Colonic mucosa (tissue), 4 donors: ENCODE measurements at regions of chr4 and their contacts with region 1.

Region 1: DNA sequence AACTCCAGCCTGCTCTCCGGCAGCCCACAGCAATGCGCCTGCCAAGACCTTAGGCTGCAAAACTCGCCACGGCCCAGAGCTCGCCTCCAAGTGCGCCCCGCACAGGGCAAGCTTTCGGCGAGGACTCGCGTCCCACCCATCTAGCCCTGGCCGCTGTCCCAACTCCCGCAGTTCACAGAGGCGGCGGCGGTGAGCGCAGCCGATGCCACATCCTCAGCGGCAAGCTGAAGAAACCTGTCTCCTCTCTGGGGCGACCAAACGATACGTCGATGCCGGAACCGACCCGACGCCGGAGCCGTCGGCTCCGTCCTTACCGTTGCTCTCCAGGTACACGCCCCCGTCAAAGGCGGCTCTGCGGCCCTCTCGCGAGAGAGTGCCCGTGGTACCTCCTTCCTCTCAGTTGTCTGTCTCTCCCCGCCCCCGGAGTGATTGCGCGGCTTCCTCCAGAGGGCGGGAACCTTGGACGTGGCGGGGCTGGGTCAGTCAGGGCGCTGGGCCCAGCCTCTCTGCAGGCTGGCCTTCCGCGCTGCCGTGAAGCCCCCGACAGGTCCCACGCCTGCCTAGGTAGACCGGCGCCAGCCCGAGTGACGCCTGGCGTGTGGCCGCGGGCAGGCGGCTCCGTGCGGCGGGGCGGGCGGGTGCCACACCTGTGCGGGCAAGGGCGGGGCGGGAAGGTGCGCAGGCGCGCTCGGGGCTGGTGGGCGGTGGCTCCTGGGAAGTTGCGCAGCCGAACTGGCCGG is 380 bp upstream of the RAB33B start:
- DNase-seq: peak; percentile 98
- H3K4me3 ChIP-seq: peak overlapping the region; percentile 83
- H3K27ac ChIP-seq: peak overlapping the region; percentile 99
- H3K4me1 ChIP-seq: peaks cover 6% of the 10 kb centered on the region
- H3K27me3 ChIP-seq: no peaks in the 10 kb centered on the region
- CTCF ChIP-seq: peak; percentile 10

Region 2: DNA sequence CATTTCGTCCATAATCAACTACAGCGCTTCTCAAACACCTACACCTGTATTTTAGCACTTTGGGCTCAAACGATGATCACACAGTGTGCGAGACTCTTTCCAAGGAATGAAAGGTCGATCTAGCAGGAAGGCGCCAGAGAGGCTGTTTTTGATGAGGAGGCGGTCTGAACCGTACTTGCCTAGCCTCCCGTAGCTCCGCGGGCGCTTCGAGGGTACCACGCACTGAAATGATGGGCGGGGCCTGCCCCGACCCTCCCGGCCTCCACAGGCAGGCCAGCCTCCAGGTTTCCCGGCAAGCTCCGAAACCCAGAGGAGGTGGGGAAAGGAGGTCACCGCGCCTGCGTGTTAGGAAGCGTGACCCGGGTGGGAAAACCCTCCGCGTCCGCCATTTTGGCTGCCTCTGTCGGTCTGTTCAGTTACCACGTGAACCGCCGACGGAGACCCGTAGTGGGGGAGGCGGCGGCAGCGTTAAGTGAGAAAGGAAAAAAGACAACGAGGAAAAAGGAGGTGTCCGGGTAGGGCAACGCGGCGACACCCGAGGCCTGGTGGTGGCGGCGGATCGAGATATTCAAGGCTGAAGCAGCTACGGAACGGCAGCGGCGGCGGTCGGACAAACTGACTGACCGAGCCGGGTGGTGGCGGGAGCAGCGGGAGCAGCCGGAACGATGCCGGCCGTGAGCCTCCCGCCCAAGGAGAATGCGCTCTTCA is 152.3 kb before region 1 on chr4 and contains the start of gene NAA15:
- intact Hi-C with region 1: loop called (anchors 10 kb)
- DNase-seq: peak; percentile 98
- H3K4me3 ChIP-seq: peak within 1 kb of the TSS; percentile 87
- H3K27ac ChIP-seq: peak within 1 kb of the TSS; percentile 94
- H3K4me1 ChIP-seq: no peaks in the 10 kb centered on the region
- H3K27me3 ChIP-seq: no peaks in the 10 kb centered on the region
- CTCF ChIP-seq: no peak
- total RNA-seq, gene NAA15: 32.4 to 55.5 TPM